Right ventricle myocardium superior (tissue), 1 donor: ENCODE measurements at regions of chr5 and their contacts with region 1.

Region 1: GRCh38 chr5:73591102-73591695 is 25.7 kb downstream of the UTP15 start:
- DNase-seq: no peak
- ATAC-seq: peak; percentile 81

Region 2: GRCh38 chr5:73471654-73472053 is 119.5 kb before region 1 on chr5:
- intact Hi-C with region 1: no loop called
- DNase-seq: no peak
- ATAC-seq: no peak

Region 3: DNA sequence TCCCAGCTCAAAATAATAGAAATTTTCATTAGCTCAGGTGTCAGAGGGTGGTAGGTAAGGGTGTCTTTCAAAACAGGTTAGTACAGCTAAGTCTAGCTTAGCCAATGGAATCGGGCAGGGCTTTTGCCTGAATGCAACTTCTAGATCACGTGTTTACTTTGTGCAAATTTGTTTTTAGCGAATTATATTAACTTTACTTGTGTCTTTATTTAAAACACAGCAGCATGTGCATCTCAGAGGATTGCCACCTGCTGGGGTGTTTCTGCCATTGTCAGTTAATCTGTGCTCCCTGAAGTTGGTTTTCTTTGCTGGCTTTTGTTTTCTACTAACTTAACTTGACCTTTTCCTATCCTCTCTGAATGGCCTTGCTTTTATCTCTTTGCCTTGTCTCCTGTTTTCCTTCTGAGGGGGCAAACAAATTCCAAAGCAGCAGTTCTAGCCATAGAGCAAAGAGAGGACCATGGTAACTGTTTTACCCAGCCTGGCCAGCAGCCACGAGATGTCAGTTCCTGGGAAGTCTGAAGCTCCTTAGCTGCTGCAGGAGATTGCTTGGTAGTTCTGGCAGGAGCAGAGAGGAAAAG is 102.4 kb after region 1 on chr5:
- intact Hi-C with region 1: loop called (anchors 5 kb)
- DNase-seq: no peak
- ATAC-seq: no peak

Region 4: GRCh38 chr5:73792687-73793320 is 201.6 kb after region 1 on chr5:
- intact Hi-C with region 1: loop called (anchors 2 kb)
- DNase-seq: peak; percentile 74
- ATAC-seq: peak; percentile 86